ENCODE measurements at regions of chr16 and their contacts with region 1.

Region 1: DNA sequence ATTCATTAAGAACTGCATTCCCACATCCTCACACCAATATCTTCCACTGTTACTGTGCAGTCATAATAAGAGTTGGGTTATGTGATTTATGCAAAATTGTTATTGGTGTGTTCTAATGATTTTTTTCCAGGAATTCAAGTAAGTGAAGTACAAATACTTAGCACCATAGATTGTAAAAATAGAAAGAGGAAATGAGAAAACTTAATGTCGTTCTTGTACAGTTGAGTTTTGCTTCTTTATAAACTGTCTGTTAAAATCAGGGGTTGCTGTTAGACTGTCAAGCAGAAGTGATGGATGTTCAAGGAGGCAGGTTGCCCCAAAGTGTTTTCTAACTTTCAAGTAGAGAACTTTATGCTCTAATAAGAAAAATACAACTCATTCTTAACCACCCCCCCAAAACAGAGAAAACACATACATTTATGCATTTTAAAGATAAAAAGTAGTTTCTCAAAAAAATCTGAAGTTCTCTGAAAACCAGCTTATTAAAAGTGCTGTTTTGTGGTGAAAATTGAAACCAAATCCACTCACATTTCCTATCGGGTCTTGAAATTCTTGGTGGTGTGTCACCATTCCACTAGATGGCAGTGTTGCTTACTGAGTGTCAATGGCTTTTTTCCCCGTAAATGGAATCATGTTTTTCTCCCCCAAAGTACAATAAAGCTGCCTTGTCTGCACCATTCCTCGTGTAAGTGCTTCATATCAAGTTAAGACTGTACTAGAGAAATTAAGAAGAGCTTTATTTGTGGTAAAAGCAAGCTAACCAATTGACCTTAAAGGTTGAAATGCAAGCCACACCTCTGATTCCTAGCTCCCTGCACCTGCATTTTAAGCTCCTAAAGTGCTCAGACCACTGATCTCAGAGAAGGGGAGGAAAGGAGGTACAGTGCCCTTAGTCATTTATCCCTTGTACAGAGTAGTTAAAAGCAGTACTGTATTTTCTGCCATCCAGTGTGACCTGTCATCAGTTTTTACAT is 4.7 kb upstream of the IGSF6 start:
- DNase-seq: no peak
- ATAC-seq: peak; percentile 22; the same call in 1 of the 2 replicates
- H3K4me3 Mint-ChIP-seq: no peak overlapping the region
- H3K27ac Mint-ChIP-seq: no peak overlapping the region
- H3K4me1 Mint-ChIP-seq: peaks cover 3% of the 10 kb centered on the region; the same call in 1 of the 2 replicates
- H3K27me3 Mint-ChIP-seq: no peaks in the 10 kb centered on the region
- CTCF ChIP-seq: peak; percentile 67

Region 2: GRCh38 chr16:21554795-21555585 is 102.1 kb before region 1 on chr16:
- CTCF ChIA-PET with region 1: no interaction called
- POLR2A ChIA-PET with region 1: no interaction called
- DNase-seq: peak; percentile 88
- ATAC-seq: peak; percentile 87
- H3K4me3 Mint-ChIP-seq: peak overlapping the region; percentile 57
- H3K27ac Mint-ChIP-seq: peak overlapping the region; percentile 76
- H3K4me1 Mint-ChIP-seq: no peaks in the 10 kb centered on the region
- H3K27me3 Mint-ChIP-seq: peaks cover 2% of the 10 kb centered on the region
- CTCF ChIP-seq: peak; percentile 82

Region 3: GRCh38 chr16:21574381-21574780 is 82.7 kb before region 1 on chr16:
- CTCF ChIA-PET with region 1: no interaction called
- POLR2A ChIA-PET with region 1: no interaction called
- DNase-seq: no peak
- ATAC-seq: no peak
- H3K4me3 Mint-ChIP-seq: no peak overlapping the region
- H3K27ac Mint-ChIP-seq: no peak overlapping the region
- H3K4me1 Mint-ChIP-seq: no peaks in the 10 kb centered on the region
- H3K27me3 Mint-ChIP-seq: no peaks in the 10 kb centered on the region
- CTCF ChIP-seq: no peak

Region 4: DNA sequence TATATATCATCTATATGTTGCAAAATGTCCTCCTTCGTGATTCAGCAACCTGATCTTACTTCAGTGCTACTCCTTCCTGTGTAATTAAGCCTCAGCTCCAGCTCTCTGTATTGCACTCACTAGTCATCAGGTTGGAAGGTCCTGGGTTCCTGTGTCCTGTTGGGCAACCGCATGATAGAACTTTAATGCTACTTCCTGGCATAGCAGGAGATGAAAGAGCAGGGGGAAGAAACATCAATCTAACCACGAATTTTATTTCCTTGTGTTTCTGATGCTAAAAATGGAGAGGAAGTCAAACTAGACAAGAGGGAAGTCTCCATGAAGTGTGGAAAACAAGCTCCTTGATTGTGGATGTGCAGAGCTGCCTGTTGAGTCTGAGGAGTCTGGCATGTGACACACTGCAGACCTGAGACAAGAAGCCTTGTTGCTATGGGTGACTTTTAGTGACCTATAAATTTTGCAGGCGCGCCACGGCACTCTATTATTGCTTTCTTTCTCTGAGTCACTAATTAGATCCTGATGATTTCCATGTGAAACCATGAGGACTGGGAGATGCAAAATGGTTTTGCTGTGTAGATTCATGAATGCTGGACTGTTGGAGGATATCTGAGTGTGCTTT is 30.3 kb before region 1 on chr16:
- CTCF ChIA-PET with region 1: no interaction called
- POLR2A ChIA-PET with region 1: no interaction called
- DNase-seq: no peak
- ATAC-seq: no peak
- H3K4me3 Mint-ChIP-seq: no peak overlapping the region
- H3K27ac Mint-ChIP-seq: peak overlapping the region; percentile 69
- H3K4me1 Mint-ChIP-seq: peaks cover 6% of the 10 kb centered on the region
- H3K27me3 Mint-ChIP-seq: no peaks in the 10 kb centered on the region
- CTCF ChIP-seq: no peak

Region 5: GRCh38 chr16:21646721-21647561 is 10.1 kb before region 1 on chr16:
- CTCF ChIA-PET with region 1: interaction called, 12 read pairs
- POLR2A ChIA-PET with region 1: no interaction called
- DNase-seq: no peak
- ATAC-seq: no peak
- H3K4me3 Mint-ChIP-seq: no peak overlapping the region
- H3K27ac Mint-ChIP-seq: peak overlapping the region; percentile 8; the same call in 1 of the 2 replicates
- H3K4me1 Mint-ChIP-seq: 0 out of 2 replicates have a peak, but pooled peaks cover 3% of the 10 kb centered on the region
- H3K27me3 Mint-ChIP-seq: no peaks in the 10 kb centered on the region
- CTCF ChIP-seq: no peak

Region 6: GRCh38 chr16:21698169-21699032 is 41.3 kb after region 1 on chr16:
- CTCF ChIA-PET with region 1: interaction called, 12 read pairs
- POLR2A ChIA-PET with region 1: no interaction called
- DNase-seq: no peak
- ATAC-seq: no peak
- H3K4me3 Mint-ChIP-seq: no peak overlapping the region
- H3K27ac Mint-ChIP-seq: no peak overlapping the region
- H3K4me1 Mint-ChIP-seq: 0 out of 2 replicates have a peak, but pooled peaks cover 6% of the 10 kb centered on the region
- H3K27me3 Mint-ChIP-seq: no peaks in the 10 kb centered on the region
- CTCF ChIP-seq: no peak

Region 7: GRCh38 chr16:21708533-21709115 is 51.5 kb after region 1 on chr16:
- CTCF ChIA-PET with region 1: interaction called, 45 read pairs
- POLR2A ChIA-PET with region 1: no interaction called
- DNase-seq: peak; percentile 82
- ATAC-seq: peak; percentile 44; the same call in 1 of the 2 replicates
- H3K4me3 Mint-ChIP-seq: no peak overlapping the region
- H3K27ac Mint-ChIP-seq: no peak overlapping the region
- H3K4me1 Mint-ChIP-seq: peaks cover 2% of the 10 kb centered on the region; the same call in 1 of the 2 replicates
- H3K27me3 Mint-ChIP-seq: no peaks in the 10 kb centered on the region
- CTCF ChIP-seq: peak; percentile 77

Measured in WTC11 (cell line).